Calu3 (cell line): ENCODE measurements at regions of chr12 and their contacts with region 1.

Region 1: GRCh38 chr12:124767066-124767821 is 96.4 kb downstream of the SCARB1 start:
- DNase-seq: peak; percentile 93
- H3K4me3 Mint-ChIP-seq: no peak overlapping the region
- H3K27ac Mint-ChIP-seq: peak overlapping the region; percentile 32
- H3K4me1 Mint-ChIP-seq: peaks cover 52% of the 10 kb centered on the region
- H3K27me3 Mint-ChIP-seq: peaks cover 10% of the 10 kb centered on the region
- CTCF ChIP-seq: peak; percentile 99

Region 2: GRCh38 chr12:124347716-124348357 is 419.4 kb before region 1 on chr12:
- CTCF ChIA-PET with region 1: interaction called, 7 read pairs
- intact Hi-C with region 1: loop called (anchors 10 kb)
- DNase-seq: no peak
- H3K4me3 Mint-ChIP-seq: no peak overlapping the region
- H3K27ac Mint-ChIP-seq: no peak overlapping the region
- H3K4me1 Mint-ChIP-seq: peaks cover 5% of the 10 kb centered on the region
- H3K27me3 Mint-ChIP-seq: no peaks in the 10 kb centered on the region
- CTCF ChIP-seq: peak; percentile 74

Region 3: GRCh38 chr12:124567661-124568373 is 199.4 kb before region 1 on chr12:
- CTCF ChIA-PET with region 1: interaction called, 3 read pairs
- intact Hi-C with region 1: loop called (anchors 2 kb)
- DNase-seq: peak; percentile 88
- H3K4me3 Mint-ChIP-seq: peak overlapping the region; percentile 87
- H3K27ac Mint-ChIP-seq: peak overlapping the region; percentile 56
- H3K4me1 Mint-ChIP-seq: no peaks in the 10 kb centered on the region
- H3K27me3 Mint-ChIP-seq: no peaks in the 10 kb centered on the region
- CTCF ChIP-seq: no peak

Region 4: GRCh38 chr12:124680863-124681778 is 86.1 kb before region 1 on chr12:
- CTCF ChIA-PET with region 1: no interaction called
- intact Hi-C with region 1: loop called (anchors 5 kb)
- DNase-seq: peak; percentile 76
- H3K4me3 Mint-ChIP-seq: no peak overlapping the region
- H3K27ac Mint-ChIP-seq: peak overlapping the region; percentile 31
- H3K4me1 Mint-ChIP-seq: peaks cover 72% of the 10 kb centered on the region
- H3K27me3 Mint-ChIP-seq: no peaks in the 10 kb centered on the region
- CTCF ChIP-seq: no peak

Region 5: GRCh38 chr12:124727264-124727721 is 40.0 kb before region 1 on chr12:
- CTCF ChIA-PET with region 1: interaction called, 3 read pairs
- intact Hi-C with region 1: loop called (anchors 2 kb)
- DNase-seq: peak; percentile 98
- H3K4me3 Mint-ChIP-seq: no peak overlapping the region
- H3K27ac Mint-ChIP-seq: peak overlapping the region; percentile 60
- H3K4me1 Mint-ChIP-seq: peaks cover 50% of the 10 kb centered on the region
- H3K27me3 Mint-ChIP-seq: no peaks in the 10 kb centered on the region
- CTCF ChIP-seq: no peak

Region 6: DNA sequence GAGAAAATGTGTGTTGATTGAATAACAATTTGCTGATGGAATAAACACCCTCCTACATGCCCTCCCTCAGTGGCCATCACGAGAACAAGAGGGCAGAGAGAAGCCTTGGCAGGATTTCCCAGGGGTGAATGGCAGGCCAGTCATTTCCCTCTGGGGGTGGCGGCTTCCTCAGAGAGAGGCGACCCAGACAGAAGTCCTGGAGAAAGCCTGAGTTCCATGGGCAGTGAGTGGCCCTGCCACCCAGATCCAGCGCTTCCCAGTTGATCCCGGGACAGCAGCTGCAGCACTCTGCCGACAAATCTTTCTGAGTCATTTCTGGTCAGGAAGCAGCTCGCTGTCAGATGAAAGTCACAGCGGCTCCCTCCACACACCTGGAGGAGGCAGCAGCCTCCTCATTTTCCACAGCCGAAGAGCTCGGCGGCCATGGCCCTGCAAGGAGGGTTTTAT is 26.5 kb before region 1 on chr12:
- CTCF ChIA-PET with region 1: interaction called, 6 read pairs
- intact Hi-C with region 1: loop called (anchors 2 kb)
- DNase-seq: peak; percentile 78
- H3K4me3 Mint-ChIP-seq: peak overlapping the region; percentile 27
- H3K27ac Mint-ChIP-seq: peak overlapping the region; percentile 80
- H3K4me1 Mint-ChIP-seq: peaks cover 86% of the 10 kb centered on the region
- H3K27me3 Mint-ChIP-seq: no peaks in the 10 kb centered on the region
- CTCF ChIP-seq: no peak

Region 7: GRCh38 chr12:124829008-124829707 is 61.9 kb after region 1 on chr12:
- CTCF ChIA-PET with region 1: no interaction called
- intact Hi-C with region 1: no loop called
- DNase-seq: peak; percentile 60
- H3K4me3 Mint-ChIP-seq: peak overlapping the region; percentile 12
- H3K27ac Mint-ChIP-seq: peak overlapping the region; percentile 22
- H3K4me1 Mint-ChIP-seq: peaks cover 27% of the 10 kb centered on the region
- H3K27me3 Mint-ChIP-seq: no peaks in the 10 kb centered on the region
- CTCF ChIP-seq: no peak